CD8-positive, alpha-beta memory T cell (primary cell): ENCODE measurements at regions of chr21 and their contacts with region 1.

Region 1: GRCh38 chr21:42337830-42338728 is 12.7 kb downstream of the TFF2 start:
- DNase-seq: peak; percentile 64 to 86 (median 71)
- H3K4me3 ChIP-seq: no peak overlapping the region
- H3K4me3 Mint-ChIP-seq: peak overlapping the region in 1 of 7 donors; percentile 24
- H3K27ac ChIP-seq: no peak overlapping the region
- H3K27ac Mint-ChIP-seq: peak overlapping the region in 3 of 8 donors; percentile 34 to 87 (median 77)
- H3K4me1 ChIP-seq: peaks cover 10% of the 10 kb centered on the region
- H3K4me1 Mint-ChIP-seq: peaks cover 6 to 11% (median 7%) of the 10 kb centered on the region in 3 donors
- H3K27me3 ChIP-seq: no peaks in the 10 kb centered on the region
- H3K27me3 Mint-ChIP-seq: peaks cover 2 to 4% of the 10 kb centered on the region in 2 donors

Region 2: GRCh38 chr21:42424914-42425541 is 86.9 kb after region 1 on chr21:
- CTCF ChIA-PET with region 1: interaction called, 12 read pairs
- POLR2A ChIA-PET with region 1: no interaction called
- DNase-seq: peak; percentile 67 to 90 (median 90)
- H3K4me3 ChIP-seq: peak overlapping the region; percentile 48
- H3K4me3 Mint-ChIP-seq: peak overlapping the region; percentile 43 to 80 (median 78)
- H3K27ac ChIP-seq: peak overlapping the region; percentile 57
- H3K27ac Mint-ChIP-seq: peak overlapping the region; percentile 83 to 95 (median 89)
- H3K4me1 ChIP-seq: peaks cover 73% of the 10 kb centered on the region
- H3K4me1 Mint-ChIP-seq: peaks cover 76 to 88% (median 77%) of the 10 kb centered on the region in 3 donors
- H3K27me3 ChIP-seq: no peaks in the 10 kb centered on the region
- H3K27me3 Mint-ChIP-seq: no peaks in the 10 kb centered on the region

Region 3: DNA sequence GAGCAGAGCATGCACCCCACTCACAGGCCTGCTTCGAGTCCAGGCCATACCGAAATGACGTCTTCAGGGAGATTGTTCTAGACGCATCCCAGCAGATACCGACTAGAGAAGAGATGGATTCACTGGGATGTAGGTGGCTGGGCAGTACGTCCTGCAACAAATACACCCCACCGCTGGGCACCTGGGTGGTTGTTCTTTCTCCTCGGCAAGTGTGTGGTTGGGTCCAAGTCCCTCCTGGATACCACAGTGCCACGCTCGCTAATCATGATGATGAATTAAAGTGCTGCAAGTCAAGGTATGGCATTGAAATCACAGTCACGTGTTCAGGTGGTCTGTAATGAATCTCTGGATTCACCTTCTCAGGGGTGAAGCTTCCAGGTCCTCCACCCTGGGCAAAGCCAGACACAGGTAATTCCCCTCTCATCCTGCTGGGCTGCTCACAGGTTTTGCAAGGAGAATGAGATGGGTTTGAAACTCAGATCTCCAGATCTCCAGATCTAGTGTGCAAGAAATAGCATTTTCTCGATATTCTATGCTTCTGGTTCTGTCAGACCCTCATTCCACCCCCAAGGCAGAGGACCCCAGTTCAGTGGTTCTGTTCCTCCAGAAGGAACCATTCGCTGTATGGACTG is 111.3 kb after region 1 on chr21:
- CTCF ChIA-PET with region 1: interaction called, 30 read pairs
- POLR2A ChIA-PET with region 1: interaction called, 5 read pairs
- DNase-seq: no peak
- H3K4me3 ChIP-seq: no peak overlapping the region
- H3K4me3 Mint-ChIP-seq: no peak overlapping the region
- H3K27ac ChIP-seq: no peak overlapping the region
- H3K27ac Mint-ChIP-seq: peak overlapping the region; percentile 43 to 94 (median 90)
- H3K4me1 ChIP-seq: peaks cover 24% of the 10 kb centered on the region
- H3K4me1 Mint-ChIP-seq: peaks cover 17 to 43% (median 26%) of the 10 kb centered on the region in 3 donors
- H3K27me3 ChIP-seq: no peaks in the 10 kb centered on the region
- H3K27me3 Mint-ChIP-seq: no peaks in the 10 kb centered on the region